ENCODE measurements at regions of chr12 and their contacts with region 1.

Region 1: GRCh38 chr12:1795785-1796514 is 24.4 kb upstream of the LRTM2 start:
- DNase-seq: peak; percentile 83
- H3K4me3 ChIP-seq: peak overlapping the region; percentile 40 to 59
- H3K27ac ChIP-seq: peak overlapping the region; percentile 69 to 70
- H3K4me1 ChIP-seq: peaks cover 5% of the 10 kb centered on the region
- H3K27me3 ChIP-seq: no peaks in the 10 kb centered on the region
- CTCF ChIP-seq: peak; percentile 98 to 100 (median 100)
- POLR2A ChIP-seq: peak; percentile 58

Region 2: GRCh38 chr12:1418144-1418543 is 377.8 kb before region 1 on chr12:
- intact Hi-C with region 1: no loop called
- DNase-seq: no peak
- H3K4me3 ChIP-seq: no peak overlapping the region
- H3K27ac ChIP-seq: no peak overlapping the region
- H3K4me1 ChIP-seq: no peaks in the 10 kb centered on the region
- H3K27me3 ChIP-seq: no peaks in the 10 kb centered on the region
- CTCF ChIP-seq: no peak
- POLR2A ChIP-seq: no peak

Region 3: DNA sequence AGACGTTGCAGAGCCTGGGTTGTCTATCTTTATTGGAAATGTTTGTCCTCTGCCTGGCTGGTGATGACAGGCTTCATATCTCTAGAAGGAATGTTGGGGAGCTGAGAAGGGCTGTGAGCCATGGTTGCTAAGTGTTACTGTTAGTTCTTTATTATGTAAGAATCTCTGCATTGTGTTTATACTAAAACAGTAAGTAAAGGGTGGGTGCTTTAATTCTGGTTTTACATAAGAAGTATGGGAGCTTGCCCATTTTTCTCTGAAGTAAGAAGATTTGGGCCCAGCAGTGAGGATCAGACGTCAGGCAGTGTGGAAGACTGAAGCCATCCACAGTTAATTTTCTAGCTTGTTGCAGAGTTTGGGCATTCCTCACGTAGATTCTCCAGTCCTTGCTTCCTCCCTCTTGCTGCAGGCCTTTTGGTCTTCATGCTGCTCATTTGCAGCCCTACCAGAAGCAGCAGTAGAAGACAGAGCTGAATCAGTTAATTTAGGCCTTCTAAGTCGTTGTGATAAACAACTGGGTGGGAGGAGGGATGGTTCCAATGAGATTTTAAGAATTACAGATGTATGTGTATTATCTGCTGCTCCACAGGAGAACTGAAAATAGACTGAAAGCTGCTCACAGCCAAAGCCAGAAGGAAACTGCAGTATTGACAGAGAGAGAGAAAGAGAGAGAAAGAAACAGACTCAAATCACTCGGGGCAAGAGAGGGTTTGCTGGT is 145.5 kb before region 1 on chr12:
- intact Hi-C with region 1: loop called (anchors 2 kb)
- DNase-seq: no peak
- H3K4me3 ChIP-seq: no peak overlapping the region
- H3K27ac ChIP-seq: no peak overlapping the region
- H3K4me1 ChIP-seq: no peaks in the 10 kb centered on the region
- H3K27me3 ChIP-seq: no peaks in the 10 kb centered on the region
- CTCF ChIP-seq: no peak
- POLR2A ChIP-seq: no peak

Region 4: GRCh38 chr12:1939801-1940607 is 144.1 kb after region 1 on chr12:
- intact Hi-C with region 1: loop called (anchors 1 kb)
- DNase-seq: peak; percentile 81
- H3K4me3 ChIP-seq: no peak overlapping the region
- H3K27ac ChIP-seq: peak overlapping the region; percentile 21 to 42
- H3K4me1 ChIP-seq: no peaks in the 10 kb centered on the region
- H3K27me3 ChIP-seq: no peaks in the 10 kb centered on the region
- CTCF ChIP-seq: peak; percentile 92 to 99 (median 96)
- POLR2A ChIP-seq: no peak

Region 5: GRCh38 chr12:2057041-2057794 is 261.3 kb after region 1 on chr12:
- intact Hi-C with region 1: loop called (anchors 5 kb)
- DNase-seq: peak; percentile 48
- H3K4me3 ChIP-seq: no peak overlapping the region
- H3K27ac ChIP-seq: peak overlapping the region in 1 of 2 donors; percentile 42
- H3K4me1 ChIP-seq: peaks cover 4% of the 10 kb centered on the region
- H3K27me3 ChIP-seq: no peaks in the 10 kb centered on the region
- CTCF ChIP-seq: peak; percentile 41 to 71 (median 62)
- POLR2A ChIP-seq: no peak

Region 6: GRCh38 chr12:2273288-2273687 is 477.3 kb after region 1 on chr12:
- intact Hi-C with region 1: loop called (anchors 5 kb)
- DNase-seq: no peak
- H3K4me3 ChIP-seq: no peak overlapping the region
- H3K27ac ChIP-seq: no peak overlapping the region
- H3K4me1 ChIP-seq: no peaks in the 10 kb centered on the region
- H3K27me3 ChIP-seq: no peaks in the 10 kb centered on the region
- CTCF ChIP-seq: peak in 1 of 4 experiments; percentile 33
- POLR2A ChIP-seq: no peak

Measured in prostate gland (tissue), 2 donors.